Pancreas (tissue), 10 donors: ENCODE measurements at regions of chr7 and their contacts with region 1.

Region 1: GRCh38 chr7:129367700-129368388 is 66.4 kb upstream of the STRIP2 start:
- DNase-seq: peak; percentile 57 to 89 (median 80)
- ATAC-seq: peak; percentile 93 to 98 (median 95)
- H3K4me3 ChIP-seq: peak overlapping the region in 1 of 4 donors; percentile 19
- H3K27ac ChIP-seq: peak overlapping the region in 2 of 4 donors; percentile 25 to 42
- H3K4me1 ChIP-seq: peaks cover 0 to 11% (median 9%) of the 10 kb centered on the region in 3 donors
- H3K27me3 ChIP-seq: no peaks in the 10 kb centered on the region
- CTCF ChIP-seq: peak; percentile 84 to 86 (median 84)

Region 2: DNA sequence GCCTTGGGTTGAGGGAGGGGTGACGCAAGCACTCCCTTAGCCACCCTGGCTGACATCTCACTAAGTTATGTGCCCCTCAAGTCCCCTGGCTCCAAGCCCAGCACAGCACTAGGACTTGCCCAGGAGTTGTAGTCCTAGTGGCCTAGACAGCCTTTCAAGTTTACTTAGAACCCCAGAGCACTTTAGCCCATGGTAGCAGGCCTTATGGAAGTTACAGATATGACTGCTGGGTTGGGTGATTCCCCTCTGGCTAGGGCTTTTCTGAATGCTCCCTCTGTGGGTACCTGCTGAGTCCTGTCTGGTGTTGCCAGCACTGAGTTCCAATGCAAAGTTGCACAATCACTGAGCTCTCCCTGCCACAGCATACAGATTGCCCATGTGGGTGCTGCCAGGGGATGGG is 59.8 kb before region 1 on chr7:
- intact Hi-C with region 1: no loop called
- DNase-seq: no peak
- ATAC-seq: peak in 3 of 4 donors; percentile 54 to 80 (median 66)
- H3K4me3 ChIP-seq: no peak overlapping the region
- H3K27ac ChIP-seq: no peak overlapping the region
- H3K4me1 ChIP-seq: no peaks in the 10 kb centered on the region
- H3K27me3 ChIP-seq: no peaks in the 10 kb centered on the region
- CTCF ChIP-seq: no peak

Region 3: GRCh38 chr7:129468087-129468486 is 100.2 kb after region 1 on chr7:
- intact Hi-C with region 1: loop called in 2 of 3 experiments (anchors 5 to 10 kb)
- DNase-seq: no peak
- ATAC-seq: peak in 1 of 4 donors; percentile 34
- H3K4me3 ChIP-seq: no peak overlapping the region
- H3K27ac ChIP-seq: no peak overlapping the region
- H3K4me1 ChIP-seq: no peaks in the 10 kb centered on the region
- H3K27me3 ChIP-seq: no peaks in the 10 kb centered on the region
- CTCF ChIP-seq: no peak

Region 4: DNA sequence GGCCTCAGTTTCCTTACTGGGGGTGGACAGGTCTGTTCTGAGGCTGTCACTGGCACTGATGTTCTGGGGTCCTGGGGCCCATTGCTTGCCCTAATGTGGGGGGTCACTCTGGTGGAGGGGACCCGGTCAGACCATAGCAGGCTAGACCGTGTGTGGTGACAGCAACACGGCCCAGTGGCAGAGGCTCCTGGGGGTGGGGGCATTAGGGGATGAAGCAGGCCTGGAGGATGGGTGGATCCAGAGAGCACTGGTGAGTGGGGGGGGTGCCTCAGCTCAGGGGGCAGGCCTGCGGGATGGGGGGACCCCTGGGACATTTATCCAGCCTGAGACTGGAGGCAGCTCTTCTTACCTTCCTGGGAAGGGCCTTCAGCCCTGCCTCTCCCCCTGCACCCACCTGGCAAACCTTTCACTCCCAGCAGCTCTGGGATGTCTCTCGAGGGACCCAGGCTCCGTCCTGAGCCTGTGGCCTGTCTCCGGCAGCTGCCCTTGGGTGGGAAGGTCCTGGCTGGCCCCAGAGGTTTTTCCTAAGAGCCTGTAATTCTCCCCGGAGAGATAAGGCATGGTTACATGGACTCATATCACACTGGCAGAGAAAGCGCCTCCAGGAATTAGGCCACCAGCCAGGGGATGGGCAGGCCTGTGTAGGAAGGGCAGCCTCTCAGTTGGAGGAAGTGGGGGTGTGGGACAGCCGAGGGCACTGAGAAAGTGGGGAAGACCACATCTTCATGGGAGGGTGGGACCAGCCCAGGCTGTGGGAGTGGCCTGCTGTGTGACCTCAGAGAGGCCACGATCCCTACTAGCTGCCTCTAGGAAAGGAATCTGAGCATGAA is 437.3 kb after region 1 on chr7:
- intact Hi-C with region 1: no loop called
- DNase-seq: peak in 2 of 6 donors; percentile 58 to 66
- ATAC-seq: peak in 3 of 4 donors; percentile 74 to 84 (median 82)
- H3K4me3 ChIP-seq: no peak overlapping the region
- H3K27ac ChIP-seq: no peak overlapping the region
- H3K4me1 ChIP-seq: no peaks in the 10 kb centered on the region
- H3K27me3 ChIP-seq: no peaks in the 10 kb centered on the region
- CTCF ChIP-seq: no peak